ENCODE measurements at regions of chr11 and their contacts with region 1.

Region 1: GRCh38 chr11:6443269-6444003 is 2.6 kb upstream of the HPX start:
- DNase-seq: peak; percentile 61
- H3K4me3 ChIP-seq: no peak overlapping the region
- H3K27ac ChIP-seq: no peak overlapping the region
- H3K4me1 ChIP-seq: no peaks in the 10 kb centered on the region
- H3K27me3 ChIP-seq: no peaks in the 10 kb centered on the region
- CTCF ChIP-seq: peak; percentile 75 to 85 (median 82)
- EP300 ChIP-seq: no peak
- POLR2A ChIP-seq: no peak

Region 2: DNA sequence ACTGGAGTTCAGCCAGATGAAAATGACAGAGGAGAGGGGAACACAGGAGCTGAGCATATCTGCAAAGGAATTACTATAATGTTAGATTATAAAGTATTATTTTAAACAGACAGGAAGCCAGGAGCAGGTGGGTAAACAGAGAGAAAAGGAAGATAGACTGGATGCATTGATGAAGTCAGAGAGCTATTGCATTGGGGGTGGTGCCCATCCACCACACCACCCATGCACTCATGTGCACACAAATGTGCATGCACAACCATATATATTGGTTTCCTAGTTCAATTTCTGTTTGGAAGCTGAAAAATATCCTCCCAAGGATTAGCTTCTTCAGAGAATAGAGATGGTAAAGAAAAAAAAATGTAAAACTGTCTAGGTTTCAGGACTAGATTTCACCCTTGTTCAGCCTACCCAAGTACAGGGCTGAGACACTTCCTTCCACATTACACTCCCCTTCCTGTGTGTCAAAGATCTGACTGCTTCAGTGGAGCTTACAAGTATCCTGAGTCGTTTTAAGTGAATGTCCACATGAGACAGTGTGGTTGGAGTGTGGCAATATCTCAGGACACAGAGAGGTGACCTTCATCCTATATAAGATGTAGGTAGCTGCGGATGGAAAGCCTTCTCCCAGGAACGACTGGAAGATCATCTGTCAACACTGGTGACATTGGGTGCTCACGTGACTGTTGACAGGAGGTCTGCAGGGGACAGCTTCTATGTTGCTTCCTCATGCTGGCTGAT is 65.4 kb before region 1 on chr11:
- in situ Hi-C with region 1: loop called in 3 of 4 experiments (anchors 5 to 10 kb)
- intact Hi-C with region 1: loop called (anchors 2 kb)
- DNase-seq: no peak
- H3K4me3 ChIP-seq: no peak overlapping the region
- H3K27ac ChIP-seq: no peak overlapping the region
- H3K4me1 ChIP-seq: peaks cover 0 to 15% (median 0%) of the 10 kb centered on the region in 4 donors
- H3K27me3 ChIP-seq: no peaks in the 10 kb centered on the region
- CTCF ChIP-seq: no peak
- EP300 ChIP-seq: no peak
- POLR2A ChIP-seq: no peak

Region 3: GRCh38 chr11:6505577-6506240 is 62.3 kb after region 1 on chr11:
- in situ Hi-C with region 1: loop called in 1 of 4 experiments (anchors 10 kb)
- intact Hi-C with region 1: no loop called
- DNase-seq: no peak
- H3K4me3 ChIP-seq: no peak overlapping the region
- H3K27ac ChIP-seq: peak overlapping the region in 2 of 4 donors; percentile 12 to 36
- H3K4me1 ChIP-seq: no peaks in the 10 kb centered on the region
- H3K27me3 ChIP-seq: no peaks in the 10 kb centered on the region
- CTCF ChIP-seq: peak; percentile 64 to 80 (median 73)
- EP300 ChIP-seq: no peak
- POLR2A ChIP-seq: no peak